OCI-LY7 (cell line): ENCODE measurements at regions of chrX and their contacts with region 1.

Region 1: GRCh38 chrX:46796574-46797191 is 37.8 kb upstream of the SLC9A7 start:
- DNase-seq: peak; percentile 70
- H3K4me3 ChIP-seq: no peak overlapping the region
- H3K27ac ChIP-seq: no peak overlapping the region
- H3K4me1 ChIP-seq: peaks cover 13% of the 10 kb centered on the region
- CTCF ChIP-seq: peak; percentile 82

Region 2: DNA sequence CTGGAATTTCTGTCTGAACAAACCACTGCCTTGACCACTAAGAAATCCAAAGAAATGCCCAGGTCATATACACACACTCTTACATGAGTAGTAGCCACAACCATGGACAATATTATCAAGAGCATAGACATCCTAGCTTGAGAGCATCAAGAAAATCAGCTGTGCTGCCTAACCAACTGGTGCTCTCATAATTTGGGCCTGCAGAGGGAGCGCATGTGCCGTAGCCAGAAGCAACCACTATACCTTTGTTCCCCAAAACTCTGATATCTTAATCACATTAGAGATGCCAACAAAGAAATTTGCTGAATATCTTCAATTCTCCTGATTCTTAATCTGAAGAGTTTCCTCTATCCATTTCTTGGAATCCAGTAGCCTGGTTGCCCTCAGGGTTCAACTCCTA is 415.1 kb before region 1 on chrX:
- CTCF ChIA-PET with region 1: no interaction called
- POLR2A ChIA-PET with region 1: no interaction called
- intact Hi-C with region 1: loop called (anchors 1 kb)
- DNase-seq: peak; percentile 47
- H3K4me3 ChIP-seq: no peak overlapping the region
- H3K27ac ChIP-seq: no peak overlapping the region
- H3K4me1 ChIP-seq: no peaks in the 10 kb centered on the region
- CTCF ChIP-seq: peak; percentile 77

Region 3: DNA sequence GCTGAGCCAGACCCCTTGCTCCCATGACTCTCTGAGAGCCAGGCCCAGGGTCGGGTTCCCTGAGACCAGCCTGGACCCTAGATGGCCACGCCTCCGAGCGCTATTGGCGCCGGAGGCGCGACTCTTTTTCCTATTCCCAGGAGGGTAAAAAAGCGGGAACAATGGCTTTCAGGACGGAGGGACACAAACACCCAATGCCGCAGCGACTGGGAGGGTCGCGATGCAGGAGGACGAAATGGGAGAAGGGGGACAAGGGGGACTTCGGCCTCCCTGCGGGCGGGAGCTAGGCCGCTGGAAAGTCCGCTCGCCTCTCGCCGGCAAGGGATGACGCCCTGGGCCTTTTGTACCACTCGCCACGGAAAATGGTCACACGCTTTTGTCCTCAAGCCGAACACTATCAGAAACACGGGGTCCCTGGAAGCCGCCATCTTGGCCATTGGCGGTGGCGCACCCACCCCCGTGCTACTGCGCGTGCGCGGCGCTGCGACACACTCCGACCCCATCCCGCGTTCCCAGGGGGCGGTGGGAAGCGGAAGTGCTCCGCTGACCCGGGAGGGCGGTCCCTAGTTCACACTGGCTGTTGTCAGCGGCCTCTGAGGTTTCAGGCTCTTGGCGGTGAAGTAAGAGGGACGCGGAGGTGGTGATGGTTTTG is 349.8 kb before region 1 on chrX:
- CTCF ChIA-PET with region 1: no interaction called
- POLR2A ChIA-PET with region 1: no interaction called
- intact Hi-C with region 1: no loop called
- DNase-seq: peak; percentile 89
- H3K4me3 ChIP-seq: peak overlapping the region; percentile 93
- H3K27ac ChIP-seq: no peak overlapping the region
- H3K4me1 ChIP-seq: peaks cover 10% of the 10 kb centered on the region
- CTCF ChIP-seq: no peak

Region 4: GRCh38 chrX:46554942-46555341 is 241.7 kb before region 1 on chrX:
- CTCF ChIA-PET with region 1: no interaction called
- POLR2A ChIA-PET with region 1: no interaction called
- intact Hi-C with region 1: loop called (anchors 2 kb)
- DNase-seq: no peak
- H3K4me3 ChIP-seq: no peak overlapping the region
- H3K27ac ChIP-seq: no peak overlapping the region
- H3K4me1 ChIP-seq: peaks cover 4% of the 10 kb centered on the region
- CTCF ChIP-seq: peak; percentile 58

Region 5: GRCh38 chrX:46642145-46642544 is 154.5 kb before region 1 on chrX:
- CTCF ChIA-PET with region 1: no interaction called
- POLR2A ChIA-PET with region 1: no interaction called
- intact Hi-C with region 1: loop called (anchors 10 kb)
- DNase-seq: peak; percentile 24
- H3K4me3 ChIP-seq: no peak overlapping the region
- H3K27ac ChIP-seq: no peak overlapping the region
- H3K4me1 ChIP-seq: no peaks in the 10 kb centered on the region
- CTCF ChIP-seq: peak; percentile 59

Region 6: GRCh38 chrX:46770817-46771163 is 25.9 kb before region 1 on chrX:
- CTCF ChIA-PET with region 1: no interaction called
- POLR2A ChIA-PET with region 1: no interaction called
- intact Hi-C with region 1: no loop called
- DNase-seq: no peak
- H3K4me3 ChIP-seq: no peak overlapping the region
- H3K27ac ChIP-seq: no peak overlapping the region
- H3K4me1 ChIP-seq: no peaks in the 10 kb centered on the region
- CTCF ChIP-seq: no peak

Region 7: DNA sequence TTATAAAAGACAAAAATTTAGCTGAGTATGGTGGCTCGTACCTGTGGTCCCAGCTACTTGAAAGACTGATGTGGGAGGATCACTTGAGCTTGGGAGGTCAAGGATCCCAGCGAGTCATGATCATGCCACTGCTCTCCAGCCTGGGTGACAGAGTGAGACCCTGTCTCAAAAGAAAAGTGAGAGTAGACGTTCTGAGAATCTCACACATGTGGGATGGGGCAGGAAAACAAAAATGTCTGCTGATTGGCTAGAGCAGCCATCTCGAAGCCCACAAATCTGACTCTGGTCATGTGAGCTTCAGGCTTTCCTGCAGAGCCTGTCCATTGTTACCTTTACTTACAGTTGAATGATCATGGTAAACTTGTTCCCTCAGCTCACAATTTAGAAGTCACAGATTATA is 14.6 kb before region 1 on chrX:
- CTCF ChIA-PET with region 1: no interaction called
- POLR2A ChIA-PET with region 1: no interaction called
- intact Hi-C with region 1: no loop called
- DNase-seq: no peak
- H3K4me3 ChIP-seq: no peak overlapping the region
- H3K27ac ChIP-seq: no peak overlapping the region
- H3K4me1 ChIP-seq: no peaks in the 10 kb centered on the region
- CTCF ChIP-seq: no peak

Region 8: GRCh38 chrX:47247206-47247998 is 450.7 kb after region 1 on chrX:
- CTCF ChIA-PET with region 1: no interaction called
- POLR2A ChIA-PET with region 1: no interaction called
- intact Hi-C with region 1: no loop called
- DNase-seq: no peak
- H3K4me3 ChIP-seq: no peak overlapping the region
- H3K27ac ChIP-seq: no peak overlapping the region
- H3K4me1 ChIP-seq: no peaks in the 10 kb centered on the region
- CTCF ChIP-seq: no peak